AG04450 (cell line): ENCODE measurements at regions of chr11 and their contacts with region 1.

Region 1: DNA sequence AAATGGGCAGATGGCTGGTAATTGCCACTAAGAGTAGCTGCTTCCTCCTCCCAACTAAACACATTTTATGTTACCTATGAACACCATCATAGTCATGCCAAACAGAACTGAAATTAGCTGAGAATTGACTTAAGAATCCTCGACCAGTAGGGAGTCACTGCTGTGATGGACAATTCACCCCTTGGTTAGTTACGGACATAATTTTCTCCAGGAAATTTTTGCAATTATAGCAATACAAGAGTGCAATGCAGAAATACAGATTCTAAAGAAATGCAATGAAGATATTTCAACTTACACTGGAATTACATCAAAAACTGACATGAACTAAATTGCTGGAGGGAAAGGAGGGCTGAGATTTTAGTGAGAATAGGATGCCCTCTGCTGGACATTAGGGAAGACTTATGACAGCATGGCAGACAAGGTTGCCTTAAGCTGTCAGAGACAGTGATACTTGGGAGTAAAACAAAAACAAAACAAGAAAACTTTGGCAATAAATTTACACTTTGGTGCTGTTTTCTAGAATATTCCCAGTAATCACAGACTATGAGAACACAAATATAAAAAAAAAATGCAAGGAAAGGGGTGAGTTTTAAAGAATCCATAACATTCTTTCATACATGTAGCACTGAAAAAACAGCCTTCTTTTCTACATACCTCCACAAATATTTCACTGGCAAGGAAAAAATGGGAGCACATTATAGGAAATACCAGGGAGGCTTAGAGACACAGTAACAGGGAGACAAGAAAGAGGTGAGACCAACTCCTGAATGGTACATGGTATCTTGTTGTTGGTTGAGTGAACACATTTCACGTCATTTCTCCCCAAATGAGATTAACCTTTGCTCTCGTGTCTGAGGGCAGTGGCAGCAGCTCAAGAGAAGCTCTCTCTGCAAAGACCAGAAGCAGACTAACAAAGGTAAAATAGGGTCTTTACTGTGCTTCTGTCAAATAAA is 11.2 kb upstream of the PPP2R1B start:
- DNase-seq: peak; percentile 63
- H3K4me3 ChIP-seq: no peak overlapping the region
- H3K27ac ChIP-seq: no peak overlapping the region
- H3K27me3 ChIP-seq: no peaks in the 10 kb centered on the region
- CTCF ChIP-seq: peak; percentile 79

Region 2: DNA sequence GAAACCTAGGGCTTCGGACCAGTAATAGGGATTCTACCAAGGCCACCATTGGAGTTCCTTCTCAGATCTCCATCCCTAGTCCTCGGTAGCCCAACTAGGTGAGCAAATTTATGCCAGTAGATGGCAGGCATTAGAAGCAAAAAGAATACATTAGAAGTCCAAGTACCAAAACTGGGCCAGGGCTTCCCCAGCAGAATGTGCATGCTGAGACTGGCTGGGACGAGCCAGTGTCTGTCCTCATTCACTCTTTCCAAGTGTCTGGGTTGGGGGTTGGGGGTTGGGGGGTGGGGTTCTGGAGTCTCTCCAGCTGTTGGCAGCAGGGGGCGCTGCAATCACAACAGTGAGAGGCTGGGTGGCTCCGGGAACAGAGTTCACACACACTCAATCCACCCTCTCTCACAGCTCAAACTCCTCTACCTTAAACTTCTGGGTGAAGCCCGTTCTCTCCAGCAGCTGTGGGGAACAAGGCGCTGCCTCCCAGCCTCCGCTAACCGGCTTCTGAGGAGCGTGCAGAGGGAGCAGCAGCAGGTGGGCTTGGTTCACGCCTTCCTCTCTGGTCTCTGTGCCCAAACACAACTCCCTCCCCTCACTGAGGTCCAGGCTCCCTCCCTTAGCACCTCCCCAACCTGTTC is 322.7 kb before region 1 on chr11:
- CTCF ChIA-PET with region 1: interaction called, 14 read pairs
- POLR2A ChIA-PET with region 1: no interaction called
- DNase-seq: peak; percentile 38
- H3K4me3 ChIP-seq: no peak overlapping the region
- H3K27ac ChIP-seq: no peak overlapping the region
- H3K27me3 ChIP-seq: peaks cover 3% of the 10 kb centered on the region
- CTCF ChIP-seq: peak; percentile 57; the same call in 1 of the 2 replicates

Region 3: DNA sequence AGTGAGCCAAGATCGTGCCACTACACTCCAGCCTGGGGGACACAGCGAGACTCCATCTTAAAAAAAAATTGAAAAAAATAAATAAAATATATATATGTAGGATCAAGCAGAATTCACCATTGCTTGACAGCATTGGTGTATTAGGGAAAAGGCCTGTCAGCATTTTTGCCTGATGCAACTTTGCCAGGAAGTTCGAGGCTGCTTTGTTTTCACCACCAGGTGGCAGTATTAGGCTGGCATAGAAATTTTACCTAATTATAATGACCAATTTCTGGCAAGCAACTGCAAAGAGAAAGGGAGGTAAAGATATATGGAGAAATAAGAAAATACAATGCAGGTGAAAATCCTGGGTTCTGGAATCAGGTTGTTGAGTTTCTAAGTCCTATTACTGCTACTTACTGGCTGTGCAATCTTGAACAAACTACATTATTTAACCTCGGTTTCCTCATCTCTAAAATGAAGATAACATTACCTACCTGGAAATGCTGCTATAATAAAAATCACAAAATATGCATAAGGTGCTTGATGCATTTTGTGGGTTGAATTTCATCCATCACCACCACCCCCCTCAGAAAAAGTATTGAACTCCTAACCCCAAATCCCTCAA is 212.2 kb before region 1 on chr11:
- CTCF ChIA-PET with region 1: interaction called, 19 read pairs
- POLR2A ChIA-PET with region 1: no interaction called
- DNase-seq: no peak
- H3K4me3 ChIP-seq: no peak overlapping the region
- H3K27ac ChIP-seq: no peak overlapping the region
- H3K27me3 ChIP-seq: no peaks in the 10 kb centered on the region
- CTCF ChIP-seq: peak; percentile 88

Region 4: DNA sequence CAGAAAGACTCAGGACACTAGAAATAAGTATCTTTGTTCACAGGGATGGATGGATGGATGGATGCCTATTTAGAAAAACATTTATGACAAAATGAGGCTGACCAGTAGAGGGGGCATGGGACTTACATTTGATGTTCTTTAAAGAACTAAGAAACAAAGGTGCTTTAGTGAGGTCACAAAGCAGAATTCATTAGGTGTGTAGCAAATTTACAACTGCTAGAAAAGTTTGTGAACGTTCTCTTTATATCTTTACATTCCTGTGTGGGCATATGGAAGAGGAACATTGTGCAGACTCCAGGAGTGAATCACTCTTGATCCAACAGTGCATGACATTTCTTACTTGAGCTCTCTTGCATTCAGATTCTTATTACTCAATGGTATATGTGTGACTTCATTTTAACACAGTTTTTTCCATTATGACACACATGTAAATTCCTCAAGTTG is 191.0 kb before region 1 on chr11:
- CTCF ChIA-PET with region 1: interaction called, 36 read pairs
- POLR2A ChIA-PET with region 1: no interaction called
- DNase-seq: no peak
- H3K4me3 ChIP-seq: no peak overlapping the region
- H3K27ac ChIP-seq: no peak overlapping the region
- H3K27me3 ChIP-seq: no peaks in the 10 kb centered on the region
- CTCF ChIP-seq: peak; percentile 65

Region 5: GRCh38 chr11:111766093-111766833 is 11.1 kb before region 1 on chr11 and contains the start of gene PPP2R1B:
- CTCF ChIA-PET with region 1: interaction called, 65 read pairs
- POLR2A ChIA-PET with region 1: no interaction called
- DNase-seq: no peak
- H3K4me3 ChIP-seq: peak within 1 kb of the TSS; percentile 94
- H3K27ac ChIP-seq: peak within 1 kb of the TSS; percentile 78
- H3K27me3 ChIP-seq: no peaks in the 10 kb centered on the region
- CTCF ChIP-seq: no peak
- polyA plus RNA-seq, gene PPP2R1B: 40.3 and 44.9 TPM in 2 replicates

Region 6: DNA sequence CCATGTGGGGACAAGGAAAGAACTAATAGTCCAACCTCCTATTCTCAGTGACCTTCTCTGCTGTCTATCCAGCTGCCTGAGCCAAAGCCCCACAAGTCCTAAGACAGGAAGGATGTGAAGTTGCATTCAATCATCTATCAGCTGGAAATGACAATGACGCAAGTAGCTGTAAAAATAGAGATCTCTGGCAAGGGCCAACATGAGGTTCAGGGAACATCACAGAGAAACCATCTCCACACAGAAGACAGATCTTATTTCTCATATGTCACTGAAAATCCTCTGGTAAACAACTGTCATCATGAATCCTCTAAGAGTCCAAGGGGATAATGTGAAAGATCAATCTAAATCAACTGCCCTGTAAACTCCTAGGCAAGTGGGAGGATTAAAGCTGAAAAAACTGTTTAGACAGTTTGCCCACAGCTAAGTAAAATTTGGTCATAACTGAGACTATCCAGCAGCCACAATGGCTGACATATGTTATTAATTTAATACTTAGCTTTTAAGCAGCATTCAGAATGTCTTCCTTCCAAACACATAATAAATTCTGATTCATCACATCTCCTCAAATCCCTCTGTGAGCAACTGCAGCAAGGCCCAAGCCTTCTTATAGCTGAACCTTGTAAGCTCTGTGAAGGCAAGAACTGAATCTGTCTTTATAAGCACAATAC is 41.9 kb after region 1 on chr11:
- CTCF ChIA-PET with region 1: interaction called, 10 read pairs
- POLR2A ChIA-PET with region 1: no interaction called
- DNase-seq: peak; percentile 73
- H3K4me3 ChIP-seq: no peak overlapping the region
- H3K27ac ChIP-seq: peak overlapping the region; percentile 13
- H3K27me3 ChIP-seq: no peaks in the 10 kb centered on the region
- CTCF ChIP-seq: no peak

Region 7: DNA sequence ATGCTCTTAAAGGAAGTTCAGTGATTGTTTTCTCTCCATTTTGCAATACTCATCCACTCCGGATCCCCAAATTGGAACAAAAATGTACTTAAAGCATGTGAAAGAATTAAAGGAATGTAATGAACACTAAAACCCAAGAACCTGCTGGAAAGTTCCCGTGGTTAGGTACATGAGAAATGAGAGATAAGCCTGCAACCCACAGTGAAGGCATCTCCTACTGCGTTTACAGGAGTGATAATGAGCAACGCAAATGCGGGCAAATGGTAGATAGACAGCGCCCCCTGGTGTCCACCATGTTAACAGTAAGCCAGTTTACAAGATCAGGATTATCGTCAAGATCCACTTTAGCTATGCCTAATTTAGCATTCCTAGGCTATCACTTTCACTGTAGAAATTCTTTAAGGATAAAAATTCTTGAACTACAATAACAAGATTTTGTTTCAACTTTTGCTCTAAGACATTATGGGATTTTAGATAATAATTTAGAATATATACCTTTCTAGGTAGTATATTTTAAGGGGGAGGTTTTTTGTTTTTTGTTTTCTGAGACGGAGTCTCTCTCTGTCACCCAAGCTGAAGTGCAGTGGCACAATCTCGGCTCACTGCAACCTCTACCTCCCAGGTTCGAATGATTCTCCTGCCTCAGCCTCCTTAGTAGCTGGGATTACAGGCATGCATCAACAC is 64.1 kb after region 1 on chr11:
- CTCF ChIA-PET with region 1: interaction called, 24 read pairs
- POLR2A ChIA-PET with region 1: no interaction called
- DNase-seq: peak; percentile 72
- H3K4me3 ChIP-seq: no peak overlapping the region
- H3K27ac ChIP-seq: no peak overlapping the region
- H3K27me3 ChIP-seq: no peaks in the 10 kb centered on the region
- CTCF ChIP-seq: peak; percentile 89